Activated CD8-positive, alpha-beta T cell treated with anti-CD3 and anti-CD28 coated beads for 36 hours (primary cell): ENCODE measurements at regions of chr18 and their contacts with region 1.

Region 1: DNA sequence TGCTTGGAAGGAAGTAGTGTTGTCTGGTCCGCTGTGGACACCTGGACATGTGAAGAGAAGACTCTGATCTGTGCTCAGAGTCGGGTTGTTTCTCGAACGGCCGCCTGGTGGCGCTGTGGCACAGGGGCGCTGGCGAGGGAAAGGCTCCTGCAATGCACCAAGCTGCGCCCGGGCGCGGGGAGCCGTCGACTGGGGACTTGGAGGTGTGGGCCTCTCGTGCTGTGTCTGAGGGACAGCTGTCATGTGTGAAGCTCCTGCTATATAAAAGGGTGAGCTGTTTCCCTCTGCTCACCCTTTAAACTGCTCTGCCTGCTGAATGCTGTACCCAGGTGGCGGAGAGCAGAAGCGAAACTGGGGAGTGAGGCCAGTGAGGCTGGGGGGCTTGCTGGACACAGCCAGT is 44.0 kb downstream of the GNAL start:
- DNase-seq: peak; percentile 80
- ATAC-seq: peak; percentile 91
- H3K4me3 Mint-ChIP-seq: no peak overlapping the region
- H3K27ac Mint-ChIP-seq: no peak overlapping the region
- H3K4me1 Mint-ChIP-seq: no peaks in the 10 kb centered on the region
- H3K27me3 Mint-ChIP-seq: peaks cover 32% of the 10 kb centered on the region
- CTCF ChIP-seq: peak; percentile 90

Region 2: DNA sequence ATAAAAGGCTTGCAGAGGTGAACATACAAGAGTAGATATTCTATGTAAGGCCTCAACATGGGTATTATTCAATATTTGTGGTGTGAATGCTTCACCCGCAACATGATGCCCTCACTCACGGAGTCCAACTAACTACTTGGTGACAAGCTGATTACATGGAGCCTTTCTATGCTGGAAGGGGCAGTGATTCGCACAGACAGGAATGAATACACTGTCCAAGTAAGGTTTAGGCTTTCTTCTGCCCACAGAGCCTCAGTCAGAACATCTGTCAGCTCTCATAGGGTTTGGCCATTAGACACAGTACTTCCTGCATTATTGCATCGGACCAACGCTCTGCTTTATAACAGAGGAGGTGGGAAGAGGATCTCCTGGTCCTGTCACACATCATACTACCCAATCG is 203.9 kb before region 1 on chr18:
- CTCF ChIA-PET with region 1: no interaction called
- POLR2A ChIA-PET with region 1: no interaction called
- intact Hi-C with region 1: no loop called
- DNase-seq: no peak
- ATAC-seq: no peak
- H3K4me3 Mint-ChIP-seq: no peak overlapping the region
- H3K27ac Mint-ChIP-seq: no peak overlapping the region
- H3K4me1 Mint-ChIP-seq: no peaks in the 10 kb centered on the region
- H3K27me3 Mint-ChIP-seq: no peaks in the 10 kb centered on the region
- CTCF ChIP-seq: no peak

Region 3: DNA sequence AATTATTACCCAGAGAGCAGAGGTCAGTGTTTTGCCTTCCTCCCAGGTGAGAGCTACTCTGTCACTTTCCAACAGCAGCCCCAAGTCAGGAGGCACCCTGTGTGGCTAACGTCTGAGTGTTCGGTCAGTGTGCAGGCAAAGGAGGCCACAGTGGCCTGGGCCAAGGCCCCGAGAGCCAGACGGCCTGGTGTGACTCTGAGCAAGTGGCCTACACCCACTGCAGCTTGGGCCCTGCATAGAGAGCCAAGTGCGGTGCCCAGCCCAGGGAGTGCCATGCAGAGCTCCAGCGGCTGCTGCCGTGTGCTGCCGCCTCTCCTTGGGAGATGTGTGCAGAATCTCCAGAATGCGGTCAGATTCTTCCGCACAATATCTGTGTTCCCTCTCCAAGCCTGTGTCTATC is 26.4 kb after region 1 on chr18:
- CTCF ChIA-PET with region 1: interaction called, 11 read pairs
- POLR2A ChIA-PET with region 1: no interaction called
- intact Hi-C with region 1: no loop called
- DNase-seq: no peak
- ATAC-seq: no peak
- H3K4me3 Mint-ChIP-seq: no peak overlapping the region
- H3K27ac Mint-ChIP-seq: no peak overlapping the region
- H3K4me1 Mint-ChIP-seq: no peaks in the 10 kb centered on the region
- H3K27me3 Mint-ChIP-seq: peaks cover 7% of the 10 kb centered on the region
- CTCF ChIP-seq: no peak

Region 4: GRCh38 chr18:11872479-11873136 is 139.6 kb after region 1 on chr18:
- CTCF ChIA-PET with region 1: interaction called, 5 read pairs
- POLR2A ChIA-PET with region 1: no interaction called
- intact Hi-C with region 1: loop called (anchors 10 kb)
- DNase-seq: peak; percentile 28
- ATAC-seq: peak; percentile 45
- H3K4me3 Mint-ChIP-seq: no peak overlapping the region
- H3K27ac Mint-ChIP-seq: no peak overlapping the region
- H3K4me1 Mint-ChIP-seq: no peaks in the 10 kb centered on the region
- H3K27me3 Mint-ChIP-seq: peaks cover 4% of the 10 kb centered on the region
- CTCF ChIP-seq: peak; percentile 30

Region 5: DNA sequence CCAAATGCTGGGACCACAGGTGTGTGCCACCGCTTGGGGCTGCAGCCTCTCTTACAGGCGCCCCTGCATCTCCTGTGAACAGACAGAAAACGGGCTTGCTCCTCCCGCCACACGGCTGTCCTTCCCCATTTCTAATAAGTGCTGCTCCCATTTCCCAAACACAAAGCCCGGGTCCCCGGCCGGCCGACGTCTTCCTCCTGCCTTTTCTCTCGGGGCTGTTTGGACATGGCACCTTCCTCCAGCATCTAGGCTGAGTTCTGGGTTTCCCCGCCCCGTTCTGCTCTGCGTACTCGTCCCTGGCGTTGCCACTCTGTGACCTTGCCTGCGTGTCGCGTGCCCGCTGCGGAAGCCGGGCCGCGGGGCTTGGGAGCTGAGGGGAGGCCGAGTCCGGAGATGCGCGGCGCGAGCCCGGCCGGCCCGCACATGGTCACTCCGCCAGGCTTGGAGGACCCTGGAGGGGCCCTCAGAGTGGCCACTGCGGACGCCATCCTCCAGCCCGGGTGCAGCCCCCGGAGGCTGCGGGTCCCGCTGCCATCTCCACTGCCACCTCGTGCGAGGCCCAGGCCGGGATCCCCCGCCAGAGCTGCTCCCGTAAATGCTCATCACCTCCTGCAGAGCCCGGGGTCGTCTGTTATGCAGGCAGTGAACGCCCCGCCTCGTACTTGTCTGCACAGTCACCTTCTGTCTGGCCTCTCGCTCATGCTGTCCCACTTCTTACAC is 701.0 kb after region 1 on chr18:
- CTCF ChIA-PET with region 1: no interaction called
- POLR2A ChIA-PET with region 1: no interaction called
- intact Hi-C with region 1: no loop called
- DNase-seq: no peak
- ATAC-seq: no peak
- H3K4me3 Mint-ChIP-seq: no peak overlapping the region
- H3K27ac Mint-ChIP-seq: no peak overlapping the region
- H3K4me1 Mint-ChIP-seq: no peaks in the 10 kb centered on the region
- H3K27me3 Mint-ChIP-seq: no peaks in the 10 kb centered on the region
- CTCF ChIP-seq: no peak